Heart left ventricle (tissue), 16 donors: ENCODE measurements at regions of chr7 and their contacts with region 1.

Region 1: DNA sequence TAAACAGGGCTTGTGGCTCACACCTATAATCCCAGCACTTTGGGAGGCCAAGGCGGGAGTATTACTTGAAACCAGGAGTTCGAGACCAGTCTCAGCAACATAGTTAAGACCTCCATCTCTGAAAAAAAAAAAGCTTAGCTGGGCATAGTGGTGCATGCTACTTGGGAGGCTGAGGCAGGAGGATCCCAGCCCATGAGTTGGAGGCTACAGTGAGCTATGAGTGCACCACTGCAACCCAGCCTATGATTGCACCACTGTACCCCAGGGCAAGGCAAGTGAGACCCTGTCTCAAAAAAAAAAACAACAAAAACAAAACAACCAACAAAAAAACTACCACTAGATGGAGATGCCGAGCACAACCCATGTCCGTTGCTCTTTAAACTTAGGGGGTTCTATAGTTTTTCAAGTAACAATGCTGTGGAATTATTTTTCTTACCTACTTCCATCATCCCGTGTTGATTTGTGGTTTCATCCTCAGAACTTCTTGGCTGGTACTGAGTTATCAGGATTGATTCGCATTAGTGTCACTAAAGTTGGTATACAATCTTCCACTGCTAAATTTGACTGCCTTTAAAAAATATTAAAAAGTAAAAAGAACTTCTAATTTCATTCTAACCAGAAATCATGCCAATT is 12.2 kb upstream of the REPIN1 start:
- DNase-seq: no peak
- ATAC-seq: no peak
- H3K4me3 ChIP-seq: no peak overlapping the region
- H3K27ac ChIP-seq: no peak overlapping the region
- H3K4me1 ChIP-seq: peaks cover 0 to 12% (median 0%) of the 10 kb centered on the region in 12 donors
- H3K27me3 ChIP-seq: no peaks in the 10 kb centered on the region
- CTCF ChIP-seq: peak; percentile 49 to 79 (median 68)
- POLR2A ChIP-seq: no peak

Region 2: DNA sequence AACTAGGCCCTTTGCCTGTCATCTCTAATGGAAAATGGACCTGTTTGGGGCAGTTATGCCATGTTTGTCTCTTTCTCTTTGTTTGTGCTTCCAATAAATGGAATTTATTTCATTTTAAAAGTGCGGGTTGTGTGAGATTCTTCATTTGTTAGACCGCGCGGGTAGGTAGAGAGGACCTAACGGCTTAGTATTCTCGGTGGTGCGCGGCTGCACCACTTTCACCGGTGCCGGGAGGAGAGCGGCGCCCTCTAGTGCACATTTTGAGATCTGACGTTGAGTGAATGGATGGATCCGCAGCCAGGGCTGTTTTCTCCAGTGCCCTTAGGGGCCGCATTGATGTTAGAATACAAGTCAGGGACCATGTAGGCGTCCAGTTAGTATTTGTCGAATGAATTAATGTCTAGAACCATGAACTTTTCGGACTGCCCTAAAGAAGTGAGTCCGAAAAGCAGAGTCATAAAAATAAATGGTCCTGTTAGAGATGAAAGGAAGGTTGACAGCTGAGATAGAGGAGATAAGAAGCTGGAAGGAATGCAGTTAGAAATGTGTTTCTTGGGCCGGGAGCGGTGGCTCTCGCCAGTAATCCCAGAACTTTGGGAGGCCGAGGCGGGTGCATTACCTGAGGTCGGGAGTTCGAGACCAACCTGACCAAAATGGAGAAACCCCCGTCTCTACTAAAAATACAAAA is 64.8 kb after region 1 on chr7:
- intact Hi-C with region 1: loop called (anchors 1 to 5 kb)
- DNase-seq: peak; percentile 76 to 87 (median 85)
- ATAC-seq: peak; percentile 87 to 99 (median 97)
- H3K4me3 ChIP-seq: no peak overlapping the region
- H3K27ac ChIP-seq: no peak overlapping the region
- H3K4me1 ChIP-seq: peaks cover 0 to 6% (median 0%) of the 10 kb centered on the region in 12 donors
- H3K27me3 ChIP-seq: no peaks in the 10 kb centered on the region
- CTCF ChIP-seq: peak; percentile 85 to 95 (median 88)
- POLR2A ChIP-seq: no peak

Region 3: GRCh38 chr7:150489782-150490181 is 133.4 kb after region 1 on chr7:
- intact Hi-C with region 1: no loop called
- DNase-seq: no peak
- ATAC-seq: peak in 2 of 4 donors; percentile 36 to 50
- H3K4me3 ChIP-seq: no peak overlapping the region
- H3K27ac ChIP-seq: peak overlapping the region in 1 of 12 donors; percentile 73
- H3K4me1 ChIP-seq: peaks cover 0 to 43% (median 0%) of the 10 kb centered on the region in 12 donors
- H3K27me3 ChIP-seq: no peaks in the 10 kb centered on the region
- CTCF ChIP-seq: no peak
- POLR2A ChIP-seq: no peak

Region 4: DNA sequence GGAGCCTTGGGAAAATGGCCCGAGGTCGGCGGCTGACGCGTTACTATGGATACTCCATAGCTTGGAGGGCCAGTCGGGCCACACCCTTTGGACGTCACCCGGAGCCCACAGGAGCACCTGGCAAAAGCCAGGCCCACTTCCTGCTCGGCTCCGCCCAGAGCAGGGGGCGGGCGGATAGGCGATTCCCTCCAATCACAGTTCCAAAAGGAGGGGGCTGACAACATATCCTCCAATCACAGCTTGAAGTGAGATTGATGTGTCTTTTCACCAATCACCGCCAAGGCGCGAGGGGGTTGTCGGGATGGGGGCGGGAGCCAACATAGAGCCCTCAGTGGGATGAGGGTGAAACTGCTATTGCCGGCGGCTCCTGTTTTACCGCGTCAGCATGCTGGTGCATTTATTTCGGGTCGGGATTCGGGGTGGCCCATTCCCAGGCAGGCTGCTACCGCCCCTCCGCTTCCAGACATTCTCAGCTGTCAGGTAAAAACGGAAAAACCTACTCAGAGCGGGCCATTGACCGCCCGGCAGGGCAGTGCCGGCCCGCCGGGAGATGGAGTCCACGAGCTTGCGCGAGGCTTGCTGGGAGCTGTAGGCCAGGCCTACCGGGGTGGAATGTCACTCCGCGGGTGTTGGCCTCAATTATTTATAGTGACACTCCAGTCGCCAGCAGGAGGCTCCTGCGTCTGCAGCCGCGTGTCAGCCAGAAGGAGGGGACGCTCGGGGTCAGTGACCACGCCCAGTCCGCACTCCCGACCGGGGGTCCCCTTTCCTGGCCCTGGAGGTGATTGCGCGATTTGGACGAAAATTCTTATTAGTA is 672.0 kb after region 1 on chr7 and contains the start of gene ABCB8:
- intact Hi-C with region 1: no loop called
- DNase-seq: peak; percentile 96 to 99 (median 98)
- ATAC-seq: peak; percentile 96 to 98 (median 96)
- H3K4me3 ChIP-seq: peak within 1 kb of the TSS; percentile 62 to 91 (median 76)
- H3K27ac ChIP-seq: peak within 1 kb of the TSS; percentile 15 to 90 (median 85)
- H3K4me1 ChIP-seq: peaks cover 0 to 22% (median 15%) of the 10 kb centered on the region in 12 donors
- H3K27me3 ChIP-seq: peaks cover 0 to 4% (median 0%) of the 10 kb centered on the region in 9 donors
- CTCF ChIP-seq: peak; percentile 43 to 77 (median 60)
- POLR2A ChIP-seq: peak in 1 of 2 donors; percentile 74
- total RNA-seq, gene ABCB8: 13.6 to 34.5 (median 26.0) TPM